ENCODE measurements at regions of chr22 and their contacts with region 1.

Region 1: GRCh38 chr22:23553924-23554870 is 25.9 kb downstream of the IGLL1 start:
- DNase-seq: no peak
- H3K4me3 ChIP-seq: no peak overlapping the region
- H3K27ac ChIP-seq: no peak overlapping the region
- H3K4me1 ChIP-seq: no peaks in the 10 kb centered on the region
- H3K27me3 ChIP-seq: no peaks in the 10 kb centered on the region
- CTCF ChIP-seq: no peak
- POLR2A ChIP-seq: no peak

Region 2: GRCh38 chr22:23437779-23438178 is 116.4 kb before region 1 on chr22:
- intact Hi-C with region 1: no loop called
- DNase-seq: peak in 1 of 2 donors; percentile 49
- H3K4me3 ChIP-seq: no peak overlapping the region
- H3K27ac ChIP-seq: no peak overlapping the region
- H3K4me1 ChIP-seq: peaks cover 6% of the 10 kb centered on the region
- H3K27me3 ChIP-seq: no peaks in the 10 kb centered on the region
- CTCF ChIP-seq: no peak
- POLR2A ChIP-seq: no peak

Region 3: GRCh38 chr22:23781511-23782315 is 227.5 kb after region 1 on chr22:
- intact Hi-C with region 1: no loop called
- DNase-seq: no peak
- H3K4me3 ChIP-seq: no peak overlapping the region
- H3K27ac ChIP-seq: peak overlapping the region; percentile 17
- H3K4me1 ChIP-seq: peaks cover 36% of the 10 kb centered on the region
- H3K27me3 ChIP-seq: no peaks in the 10 kb centered on the region
- CTCF ChIP-seq: no peak
- POLR2A ChIP-seq: no peak

Region 4: DNA sequence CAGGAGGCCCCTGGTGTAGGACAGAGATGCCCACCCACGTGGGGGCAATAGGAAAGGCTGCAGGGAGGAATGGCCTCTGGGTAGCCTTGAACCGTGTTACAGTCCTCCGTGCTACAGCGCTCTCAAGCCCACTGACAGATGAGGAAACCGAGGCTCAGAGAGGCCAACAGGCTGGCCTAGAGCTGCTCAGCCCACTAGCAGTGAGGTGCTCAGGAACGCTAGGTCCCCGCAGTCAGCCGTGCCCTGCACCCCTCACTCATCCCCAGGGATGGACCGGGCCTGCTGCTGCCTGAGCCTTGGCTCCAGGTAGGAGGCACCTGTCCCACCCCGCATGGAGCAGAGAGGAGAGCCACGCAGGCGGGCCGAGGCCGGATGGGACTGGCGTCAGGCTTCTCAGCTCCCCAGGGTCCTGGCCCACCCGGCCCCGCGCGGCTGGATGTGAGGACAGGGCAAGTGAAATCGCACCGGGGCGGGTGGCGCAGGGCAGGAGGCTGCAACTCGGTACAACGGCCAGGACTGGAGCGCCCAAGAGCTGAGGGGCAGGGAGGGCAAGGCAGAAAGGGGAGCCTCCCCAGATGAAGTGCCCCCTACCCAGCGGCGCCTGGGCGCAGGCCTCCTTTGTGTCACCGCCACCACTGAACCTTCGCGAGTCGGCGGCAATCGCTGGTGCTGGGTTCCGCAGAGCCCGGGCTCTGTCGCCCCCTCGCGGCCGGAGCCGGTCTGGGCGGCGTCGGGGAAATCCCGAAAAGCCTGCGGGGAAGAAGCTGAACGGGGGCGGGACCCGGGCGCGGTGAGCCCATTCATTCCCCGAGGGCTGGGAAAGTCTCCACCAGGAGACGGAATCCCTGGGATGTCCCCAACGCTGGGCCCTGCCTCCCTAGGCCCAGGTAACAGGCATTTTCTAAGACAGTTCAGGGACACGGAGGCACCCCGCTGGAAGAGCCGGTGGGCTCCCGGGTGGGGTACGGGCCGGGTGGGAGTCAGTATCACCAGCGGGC is 295.1 kb after region 1 on chr22:
- intact Hi-C with region 1: loop called (anchors 10 kb)
- DNase-seq: no peak
- H3K4me3 ChIP-seq: no peak overlapping the region
- H3K27ac ChIP-seq: no peak overlapping the region
- H3K4me1 ChIP-seq: peaks cover 44% of the 10 kb centered on the region
- H3K27me3 ChIP-seq: no peaks in the 10 kb centered on the region
- CTCF ChIP-seq: peak; percentile 92 to 94 (median 93)
- POLR2A ChIP-seq: no peak

Measured in vagina (tissue), 2 donors.